ENCODE measurements at regions of chr16 and their contacts with region 1.

Region 1: DNA sequence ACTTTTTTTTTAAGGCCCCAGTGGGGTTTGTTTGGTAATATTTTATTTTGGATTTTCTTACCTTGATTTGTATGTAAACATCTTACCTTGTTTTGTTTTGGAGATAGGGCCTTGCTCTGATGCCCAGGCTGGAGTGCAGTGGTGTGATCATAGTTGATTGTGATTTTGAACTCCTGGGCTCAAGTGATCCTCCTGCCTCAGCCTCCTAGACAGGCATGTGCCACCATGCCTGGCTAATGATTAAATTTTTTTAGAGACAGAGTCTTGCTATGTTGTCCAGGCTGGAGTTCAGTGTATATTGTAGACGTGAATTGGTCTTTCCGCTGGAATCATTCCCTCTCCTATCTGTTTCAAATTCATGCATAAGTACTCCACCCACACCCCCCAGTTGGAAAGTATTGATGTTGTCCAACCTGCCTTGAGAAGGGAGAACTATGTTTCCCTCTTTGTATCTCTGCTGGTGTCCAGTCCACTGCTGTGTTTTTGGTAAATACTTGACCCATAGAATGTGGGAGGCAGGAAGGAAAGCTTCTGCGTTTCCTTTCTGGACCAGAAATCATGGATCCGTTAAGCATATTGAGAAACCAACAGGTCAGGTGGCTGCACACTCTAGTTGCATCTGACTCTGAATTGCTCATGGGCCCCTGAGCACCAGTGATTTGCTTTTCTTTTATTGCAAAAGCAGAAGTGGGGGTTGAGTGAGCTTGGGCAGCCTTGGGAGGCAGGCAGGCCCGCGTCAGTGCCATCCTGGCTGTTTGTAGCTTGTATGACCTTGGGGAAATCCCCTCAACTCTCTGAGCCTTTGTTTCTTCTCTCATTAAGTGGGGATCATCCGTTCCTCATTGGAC is 25.0 kb downstream of the RMI2 start:
- DNase-seq: no peak
- ATAC-seq: no peak
- H3K4me3 Mint-ChIP-seq: no peak overlapping the region
- H3K27ac Mint-ChIP-seq: peak overlapping the region; percentile 4; the same call in 1 of the 2 replicates
- H3K4me1 Mint-ChIP-seq: peaks cover 18% of the 10 kb centered on the region
- H3K27me3 Mint-ChIP-seq: no peaks in the 10 kb centered on the region
- CTCF ChIP-seq: no peak

Region 2: GRCh38 chr16:10971560-10971961 is 398.7 kb before region 1 on chr16:
- CTCF ChIA-PET with region 1: interaction called, 17 read pairs
- POLR2A ChIA-PET with region 1: no interaction called
- DNase-seq: peak; percentile 46
- ATAC-seq: peak; percentile 90
- H3K4me3 Mint-ChIP-seq: no peak overlapping the region
- H3K27ac Mint-ChIP-seq: no peak overlapping the region
- H3K4me1 Mint-ChIP-seq: peaks cover 5% of the 10 kb centered on the region
- H3K27me3 Mint-ChIP-seq: no peaks in the 10 kb centered on the region
- CTCF ChIP-seq: peak; percentile 43

Region 3: GRCh38 chr16:11183035-11183812 is 187.1 kb before region 1 on chr16:
- CTCF ChIA-PET with region 1: interaction called, 11 read pairs
- POLR2A ChIA-PET with region 1: no interaction called
- DNase-seq: peak; percentile 52
- ATAC-seq: peak; percentile 33
- H3K4me3 Mint-ChIP-seq: no peak overlapping the region
- H3K27ac Mint-ChIP-seq: no peak overlapping the region
- H3K4me1 Mint-ChIP-seq: peaks cover 25% of the 10 kb centered on the region
- H3K27me3 Mint-ChIP-seq: no peaks in the 10 kb centered on the region
- CTCF ChIP-seq: no peak

Region 4: GRCh38 chr16:11262915-11263314 is 107.4 kb before region 1 on chr16:
- CTCF ChIA-PET with region 1: interaction called, 70 read pairs
- POLR2A ChIA-PET with region 1: no interaction called
- DNase-seq: no peak
- ATAC-seq: no peak
- H3K4me3 Mint-ChIP-seq: no peak overlapping the region
- H3K27ac Mint-ChIP-seq: no peak overlapping the region
- H3K4me1 Mint-ChIP-seq: peaks cover 13% of the 10 kb centered on the region
- H3K27me3 Mint-ChIP-seq: no peaks in the 10 kb centered on the region; the same call in 1 of the 2 replicates
- CTCF ChIP-seq: no peak

Region 5: DNA sequence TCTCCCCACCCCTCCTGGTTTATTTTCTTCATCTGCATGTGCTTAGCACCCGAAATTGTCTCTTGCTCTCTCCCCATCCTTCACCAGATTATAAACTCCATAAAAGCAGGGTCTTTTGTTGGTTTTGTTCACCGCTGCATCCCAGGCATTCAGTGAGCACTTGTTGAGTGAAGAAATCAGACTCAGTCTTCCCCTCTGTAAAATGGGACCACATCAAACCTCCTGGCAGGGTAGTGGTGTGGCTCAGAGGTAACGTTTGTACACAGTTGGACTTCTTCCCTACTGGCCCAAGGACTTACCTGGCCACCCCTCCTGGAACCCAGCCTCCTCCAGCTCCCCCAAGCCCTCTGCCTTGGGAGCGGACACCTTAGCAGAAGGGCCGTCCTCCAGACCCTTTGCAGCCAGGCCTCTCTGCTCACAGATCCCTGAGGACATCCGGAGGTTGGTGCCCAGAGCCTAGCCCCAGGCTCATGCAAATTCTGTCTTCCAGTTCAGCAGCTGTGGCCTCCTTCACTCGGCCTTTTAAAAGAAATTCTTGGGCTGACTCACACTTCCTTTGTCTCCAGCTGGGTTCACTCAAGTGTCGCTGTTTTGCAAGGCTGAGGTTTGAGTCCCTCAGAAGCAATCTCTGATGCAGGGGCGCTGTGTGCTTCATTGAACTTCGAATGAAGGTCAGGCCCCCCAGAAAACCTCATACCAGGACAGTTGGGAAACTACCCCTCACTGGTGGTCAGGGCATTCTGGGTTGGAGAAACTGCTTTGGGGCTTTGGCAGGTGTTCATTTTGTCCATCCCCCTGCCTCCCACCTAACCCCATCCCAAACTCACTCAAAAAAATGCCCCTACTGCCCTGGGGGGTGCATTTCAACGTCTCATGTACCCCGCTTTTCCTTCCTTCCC is 41.9 kb before region 1 on chr16:
- CTCF ChIA-PET with region 1: interaction called, 19 read pairs
- POLR2A ChIA-PET with region 1: no interaction called
- DNase-seq: peak; percentile 79
- ATAC-seq: peak; percentile 89
- H3K4me3 Mint-ChIP-seq: peak overlapping the region; percentile 58
- H3K27ac Mint-ChIP-seq: peak overlapping the region; percentile 100
- H3K4me1 Mint-ChIP-seq: peaks cover 62% of the 10 kb centered on the region
- H3K27me3 Mint-ChIP-seq: no peaks in the 10 kb centered on the region
- CTCF ChIP-seq: no peak

Region 6: DNA sequence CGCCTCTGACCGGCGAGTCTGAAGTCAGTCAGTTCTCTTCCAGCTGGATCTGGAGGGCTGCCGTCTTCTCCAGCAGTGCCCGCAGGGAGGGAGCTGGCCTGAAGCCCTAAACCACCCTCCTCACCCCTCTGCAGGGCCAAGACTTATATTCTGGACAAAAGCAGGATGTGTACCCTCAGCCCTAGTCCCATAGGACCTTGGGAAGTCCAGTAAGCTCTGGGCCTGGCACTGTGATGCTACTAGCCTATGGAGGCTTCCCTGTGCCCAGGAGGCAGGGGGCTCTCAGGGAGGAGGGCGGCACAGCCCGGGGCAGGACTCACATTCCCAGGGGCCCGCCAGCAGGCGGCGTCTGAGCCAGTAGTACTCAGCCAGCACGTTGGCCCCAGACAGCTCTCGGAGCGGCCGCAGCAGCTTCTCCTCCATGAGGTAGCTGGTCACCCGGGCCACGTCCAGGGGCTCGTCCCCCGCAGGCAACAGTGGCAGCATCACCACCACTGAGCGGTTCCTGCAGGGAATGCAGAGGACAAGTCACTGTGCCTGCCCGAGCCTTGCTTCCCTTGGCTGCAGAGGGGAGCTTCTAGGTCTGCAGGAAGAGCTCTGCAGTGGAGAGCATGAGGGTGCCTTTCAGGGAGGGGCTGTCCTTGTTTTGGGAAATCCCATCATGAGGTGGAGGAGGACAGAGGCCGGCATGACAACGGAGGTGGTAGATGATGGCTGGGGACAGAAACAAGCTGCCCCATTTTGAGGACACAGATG is 16.7 kb after region 1 on chr16:
- CTCF ChIA-PET with region 1: interaction called, 148 read pairs
- POLR2A ChIA-PET with region 1: interaction called, 3 read pairs
- DNase-seq: peak; percentile 86
- ATAC-seq: peak; percentile 85
- H3K4me3 Mint-ChIP-seq: no peak overlapping the region
- H3K27ac Mint-ChIP-seq: no peak overlapping the region; the same call in 1 of the 2 replicates
- H3K4me1 Mint-ChIP-seq: peaks cover 31% of the 10 kb centered on the region
- H3K27me3 Mint-ChIP-seq: peaks cover 2% of the 10 kb centered on the region; the same call in 1 of the 2 replicates
- CTCF ChIP-seq: peak; percentile 59; the same call in 1 of the 2 replicates

Region 7: DNA sequence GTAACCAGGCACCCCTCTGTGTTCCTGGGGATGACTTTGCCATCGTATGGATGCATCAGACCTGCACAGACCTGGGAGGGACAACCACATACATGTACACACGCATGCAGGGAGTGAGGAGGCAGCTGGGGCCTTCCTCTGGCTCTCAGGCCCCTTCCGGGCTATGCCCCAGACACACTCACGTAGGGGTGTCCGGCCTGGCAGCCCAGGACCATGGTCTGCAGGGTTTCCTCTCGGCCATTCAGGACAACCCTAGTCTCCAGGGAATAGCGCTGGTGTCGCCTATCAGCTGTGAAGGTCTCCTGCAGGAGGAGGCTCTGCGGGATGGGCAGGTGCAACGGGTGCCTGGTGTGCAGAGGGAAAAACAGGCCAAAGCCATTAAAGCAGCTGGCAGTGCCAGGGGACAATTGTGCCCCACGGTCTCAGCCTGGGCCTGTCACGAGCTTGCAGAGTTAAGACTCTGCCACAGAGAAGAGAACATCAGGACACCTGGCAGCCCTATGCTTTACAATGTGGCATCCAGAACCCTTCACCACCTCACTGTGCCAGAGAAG is 76.3 kb after region 1 on chr16:
- CTCF ChIA-PET with region 1: no interaction called
- POLR2A ChIA-PET with region 1: no interaction called
- DNase-seq: no peak
- ATAC-seq: no peak
- H3K4me3 Mint-ChIP-seq: no peak overlapping the region
- H3K27ac Mint-ChIP-seq: no peak overlapping the region
- H3K4me1 Mint-ChIP-seq: no peaks in the 10 kb centered on the region
- H3K27me3 Mint-ChIP-seq: no peaks in the 10 kb centered on the region
- CTCF ChIP-seq: no peak

Measured in WTC11 (cell line).